ENCODE measurements at regions of chr13 and their contacts with region 1.

Region 1: DNA sequence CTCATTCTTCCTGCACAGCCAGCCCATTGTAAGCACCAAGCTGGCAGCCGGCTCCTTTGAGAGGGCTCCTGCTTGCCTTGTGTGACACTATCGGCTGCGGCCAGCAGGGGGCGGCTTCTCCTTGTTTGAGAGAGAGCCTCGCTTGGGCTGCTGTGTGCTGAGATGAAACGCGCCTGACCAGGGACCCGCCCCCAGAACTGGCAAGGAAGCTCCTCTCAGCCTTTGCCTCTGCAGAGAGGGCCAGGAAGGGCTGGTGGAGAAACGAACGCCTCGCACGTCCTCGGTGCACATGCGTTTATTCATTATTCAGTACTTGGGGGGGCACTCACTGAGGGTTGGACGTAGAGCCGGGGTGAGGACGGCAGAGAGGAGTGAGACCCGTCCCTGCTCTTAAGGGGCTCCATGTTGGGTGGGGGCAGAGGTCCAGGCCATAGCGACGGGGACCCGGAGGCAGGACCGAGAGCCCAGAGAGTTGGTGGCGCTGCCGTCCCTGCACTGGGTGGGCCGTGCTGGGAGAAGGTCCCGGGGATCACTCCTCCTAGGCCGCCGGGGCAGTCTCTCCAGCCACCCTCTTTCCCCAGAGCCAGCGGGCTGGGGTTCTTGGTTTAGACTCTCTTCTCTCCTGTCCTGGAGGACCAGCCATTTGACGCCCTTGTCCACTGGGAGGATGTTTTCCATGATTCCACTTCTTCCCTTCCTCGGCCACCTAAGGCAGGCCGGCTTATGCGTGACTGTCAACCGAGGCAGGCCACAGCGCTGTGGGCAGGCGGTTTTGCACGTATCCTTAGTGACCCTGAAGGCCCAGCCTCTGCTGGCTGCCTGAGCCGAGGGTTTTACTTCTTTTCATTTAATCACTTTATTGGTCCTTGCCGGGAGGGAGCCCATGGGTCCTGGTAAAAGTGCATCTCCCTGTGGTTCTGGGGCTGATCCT is 174.5 kb downstream of the KATNAL1 start:
- DNase-seq: peak; percentile 91
- ATAC-seq: peak; percentile 100
- H3K4me3 ChIP-seq: no peak overlapping the region
- H3K4me3 Mint-ChIP-seq: peak overlapping the region; percentile 69
- H3K27ac ChIP-seq: no peak overlapping the region
- H3K27ac Mint-ChIP-seq: no peak overlapping the region
- H3K4me1 ChIP-seq: peaks cover 4% of the 10 kb centered on the region in 2 donors
- H3K4me1 Mint-ChIP-seq: peaks cover 5% of the 10 kb centered on the region
- H3K27me3 ChIP-seq: no peaks in the 10 kb centered on the region
- H3K27me3 Mint-ChIP-seq: peaks cover under 1% of the 10 kb centered on the region
- CTCF ChIP-seq: peak; percentile 97

Region 2: GRCh38 chr13:30153545-30154441 is 20.9 kb after region 1 on chr13:
- CTCF ChIA-PET with region 1: interaction called, 19 read pairs
- POLR2A ChIA-PET with region 1: no interaction called
- intact Hi-C with region 1: no loop called
- DNase-seq: peak; percentile 23
- ATAC-seq: peak; percentile 58
- H3K4me3 ChIP-seq: peak overlapping the region in 2 of 5 experiments; percentile 8 to 14
- H3K4me3 Mint-ChIP-seq: peak overlapping the region; percentile 23
- H3K27ac ChIP-seq: peak overlapping the region in 1 of 2 donors; percentile 12
- H3K27ac Mint-ChIP-seq: peak overlapping the region; percentile 46
- H3K4me1 ChIP-seq: peaks cover 0 to 51% of the 10 kb centered on the region in 2 donors
- H3K4me1 Mint-ChIP-seq: peaks cover 57% of the 10 kb centered on the region
- H3K27me3 ChIP-seq: no peaks in the 10 kb centered on the region
- H3K27me3 Mint-ChIP-seq: peaks cover 5% of the 10 kb centered on the region
- CTCF ChIP-seq: no peak

Region 3: GRCh38 chr13:30355384-30355699 is 222.5 kb after region 1 on chr13:
- CTCF ChIA-PET with region 1: interaction called, 9 read pairs
- POLR2A ChIA-PET with region 1: no interaction called
- intact Hi-C with region 1: loop called (anchors 5 kb)
- DNase-seq: peak; percentile 83
- ATAC-seq: peak; percentile 96
- H3K4me3 ChIP-seq: peak overlapping the region in 1 of 5 experiments; percentile 12
- H3K4me3 Mint-ChIP-seq: peak overlapping the region; percentile 72
- H3K27ac ChIP-seq: no peak overlapping the region
- H3K27ac Mint-ChIP-seq: peak overlapping the region; percentile 60
- H3K4me1 ChIP-seq: peaks cover 21 to 32% of the 10 kb centered on the region in 2 donors
- H3K4me1 Mint-ChIP-seq: peaks cover 30% of the 10 kb centered on the region
- H3K27me3 ChIP-seq: no peaks in the 10 kb centered on the region
- H3K27me3 Mint-ChIP-seq: no peaks in the 10 kb centered on the region
- CTCF ChIP-seq: peak; percentile 79

Region 4: DNA sequence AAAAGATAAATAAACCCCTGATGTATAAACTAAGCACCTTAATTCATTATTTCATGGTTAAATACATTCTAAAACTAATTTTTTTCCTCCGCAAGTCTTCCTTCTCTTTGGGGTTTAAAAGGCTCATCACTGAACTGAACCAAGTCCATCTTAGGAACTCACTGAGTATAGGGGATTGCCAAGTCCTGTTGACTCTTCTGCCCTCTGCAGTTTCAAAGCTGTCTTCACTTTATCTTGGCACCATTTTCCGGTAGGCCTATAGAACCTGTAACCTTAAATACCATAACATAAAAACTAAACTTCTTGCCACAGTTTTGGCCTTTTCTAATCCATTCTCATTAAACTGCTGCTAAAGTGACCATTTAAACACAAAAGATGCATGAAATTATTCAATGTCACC is 418.3 kb after region 1 on chr13:
- CTCF ChIA-PET with region 1: interaction called, 40 read pairs
- POLR2A ChIA-PET with region 1: no interaction called
- intact Hi-C with region 1: no loop called
- DNase-seq: peak; percentile 64
- ATAC-seq: peak; percentile 84
- H3K4me3 ChIP-seq: no peak overlapping the region
- H3K4me3 Mint-ChIP-seq: no peak overlapping the region
- H3K27ac ChIP-seq: no peak overlapping the region
- H3K27ac Mint-ChIP-seq: no peak overlapping the region
- H3K4me1 ChIP-seq: peaks cover 8% of the 10 kb centered on the region in 2 donors
- H3K4me1 Mint-ChIP-seq: peaks cover 7% of the 10 kb centered on the region
- H3K27me3 ChIP-seq: no peaks in the 10 kb centered on the region
- H3K27me3 Mint-ChIP-seq: no peaks in the 10 kb centered on the region
- CTCF ChIP-seq: peak; percentile 61

Region 5: GRCh38 chr13:30607908-30608307 is 475.0 kb after region 1 on chr13:
- CTCF ChIA-PET with region 1: interaction called, 13 read pairs
- POLR2A ChIA-PET with region 1: no interaction called
- intact Hi-C with region 1: no loop called
- DNase-seq: peak; percentile 86
- ATAC-seq: peak; percentile 95
- H3K4me3 ChIP-seq: no peak overlapping the region
- H3K4me3 Mint-ChIP-seq: peak overlapping the region; percentile 52
- H3K27ac ChIP-seq: peak overlapping the region; percentile 11 to 44
- H3K27ac Mint-ChIP-seq: peak overlapping the region; percentile 80
- H3K4me1 ChIP-seq: peaks cover 34 to 37% of the 10 kb centered on the region in 2 donors
- H3K4me1 Mint-ChIP-seq: peaks cover 48% of the 10 kb centered on the region
- H3K27me3 ChIP-seq: no peaks in the 10 kb centered on the region
- H3K27me3 Mint-ChIP-seq: no peaks in the 10 kb centered on the region
- CTCF ChIP-seq: no peak

Region 6: GRCh38 chr13:30739761-30740642 is 607.1 kb after region 1 on chr13:
- CTCF ChIA-PET with region 1: no interaction called
- POLR2A ChIA-PET with region 1: no interaction called
- intact Hi-C with region 1: loop called (anchors 5 kb)
- DNase-seq: peak; percentile 55
- ATAC-seq: peak; percentile 3
- H3K4me3 ChIP-seq: peak overlapping the region in 2 of 5 experiments; percentile 0 to 52
- H3K4me3 Mint-ChIP-seq: peak overlapping the region; percentile 84
- H3K27ac ChIP-seq: peak overlapping the region in 1 of 2 donors; percentile 45
- H3K27ac Mint-ChIP-seq: peak overlapping the region; percentile 78
- H3K4me1 ChIP-seq: peaks cover 69 to 82% of the 10 kb centered on the region in 2 donors
- H3K4me1 Mint-ChIP-seq: peaks cover 80% of the 10 kb centered on the region
- H3K27me3 ChIP-seq: no peaks in the 10 kb centered on the region
- H3K27me3 Mint-ChIP-seq: no peaks in the 10 kb centered on the region
- CTCF ChIP-seq: no peak

Region 7: DNA sequence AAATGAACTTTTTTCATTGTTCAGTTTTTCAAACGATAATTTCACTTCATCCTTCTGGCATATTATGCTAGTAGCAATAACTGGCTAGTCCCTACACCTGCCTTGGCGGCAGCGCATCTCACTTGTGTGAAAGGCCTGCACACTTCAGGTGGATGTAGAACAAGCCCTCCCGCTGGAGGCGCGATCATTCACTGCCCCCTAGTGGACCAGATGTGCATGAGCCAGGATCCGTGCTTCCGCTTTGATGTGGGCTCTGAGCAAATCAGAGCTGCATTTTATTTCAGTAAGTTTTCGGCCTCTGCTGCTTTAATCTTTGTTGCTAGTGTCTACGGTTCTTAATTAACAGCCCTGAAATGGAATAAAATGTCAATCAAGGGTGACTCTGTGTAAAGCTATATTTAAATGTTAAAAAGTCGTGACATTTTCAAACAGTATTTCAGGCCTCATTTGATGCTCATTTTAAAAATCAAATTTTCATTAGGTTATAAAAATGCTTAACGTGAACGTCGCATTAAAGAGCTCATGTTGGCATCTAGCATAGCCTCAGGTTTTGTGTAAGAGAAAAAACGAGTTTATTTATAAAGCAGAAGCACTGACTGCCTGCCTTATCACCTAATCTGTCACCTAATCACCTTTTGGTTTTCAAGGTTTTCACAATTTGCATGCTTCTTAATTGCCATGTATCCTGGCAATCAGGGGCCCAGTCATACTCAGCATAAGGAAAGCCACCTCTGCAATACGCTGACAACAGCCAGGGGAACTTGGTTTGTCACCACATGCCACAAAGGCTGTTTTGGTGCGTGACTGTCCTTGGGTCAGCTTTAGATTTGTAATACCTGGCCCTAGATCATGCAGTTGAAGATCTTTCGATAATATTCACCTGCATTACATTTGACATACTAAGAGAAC is 911.7 kb after region 1 on chr13:
- CTCF ChIA-PET with region 1: interaction called, 12 read pairs
- POLR2A ChIA-PET with region 1: no interaction called
- intact Hi-C with region 1: no loop called
- DNase-seq: peak; percentile 80
- ATAC-seq: peak; percentile 91
- H3K4me3 ChIP-seq: no peak overlapping the region
- H3K4me3 Mint-ChIP-seq: peak overlapping the region; percentile 38
- H3K27ac ChIP-seq: no peak overlapping the region
- H3K27ac Mint-ChIP-seq: no peak overlapping the region
- H3K4me1 ChIP-seq: peaks cover 18 to 20% of the 10 kb centered on the region in 2 donors
- H3K4me1 Mint-ChIP-seq: peaks cover 12% of the 10 kb centered on the region
- H3K27me3 ChIP-seq: peaks cover 0 to 51% (median 30%) of the 10 kb centered on the region in 4 experiments
- H3K27me3 Mint-ChIP-seq: peaks cover 41% of the 10 kb centered on the region
- CTCF ChIP-seq: peak; percentile 95

Measured in B cell (primary cell).